Psoas muscle (tissue), 8 donors: ENCODE measurements at regions of chr12 and their contacts with region 1.

Region 1: DNA sequence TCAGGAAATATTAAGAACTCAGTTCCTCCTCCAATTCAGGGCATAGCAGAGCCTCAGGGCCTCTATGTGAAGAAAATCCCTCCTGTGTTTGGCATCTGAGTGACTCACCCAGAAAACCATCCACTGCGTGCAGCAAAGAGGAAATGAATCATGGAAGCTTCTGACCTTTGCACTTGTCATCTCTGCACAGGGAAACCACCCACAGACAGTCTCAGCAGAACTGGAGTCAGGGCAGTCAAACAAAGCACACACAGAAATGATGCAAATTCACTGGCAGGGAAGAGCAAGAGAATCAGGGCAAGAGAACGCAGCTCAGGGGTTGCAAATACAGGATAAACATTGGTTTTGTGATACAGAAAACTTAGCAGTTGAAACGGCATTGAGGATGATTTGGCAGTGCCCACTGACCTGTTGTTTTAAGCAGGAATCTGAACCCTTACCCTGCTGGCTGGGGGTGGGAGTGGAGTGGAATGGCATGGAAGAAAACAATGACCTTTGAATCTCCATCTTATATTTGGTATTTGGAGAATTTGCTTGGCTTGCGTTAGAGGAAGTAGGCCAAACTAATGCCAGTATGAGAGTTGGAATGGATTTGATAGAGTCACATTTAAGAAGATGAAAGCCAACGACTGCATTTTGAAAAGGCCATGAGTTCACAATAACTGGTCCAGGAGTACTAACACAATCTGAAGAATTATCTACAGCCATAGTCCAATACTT is 53.5 kb downstream of the PHLDA1 start:
- DNase-seq: peak in 1 of 2 donors; percentile 24
- ATAC-seq: peak; percentile 85 to 94 (median 91)
- H3K4me3 ChIP-seq: no peak overlapping the region
- H3K27ac ChIP-seq: peak overlapping the region; percentile 65
- H3K4me1 ChIP-seq: peaks cover 7% of the 10 kb centered on the region
- H3K27me3 ChIP-seq: no peaks in the 10 kb centered on the region
- CTCF ChIP-seq: no peak

Region 2: GRCh38 chr12:75939016-75939642 is 39.0 kb before region 1 on chr12:
- intact Hi-C with region 1: loop called in 1 of 2 experiments (anchors 5 kb)
- DNase-seq: no peak
- ATAC-seq: no peak
- H3K4me3 ChIP-seq: no peak overlapping the region
- H3K27ac ChIP-seq: no peak overlapping the region
- H3K4me1 ChIP-seq: no peaks in the 10 kb centered on the region
- H3K27me3 ChIP-seq: no peaks in the 10 kb centered on the region
- CTCF ChIP-seq: no peak